H1 (cell line): ENCODE measurements at regions of chr2 and their contacts with region 1.

Region 1: DNA sequence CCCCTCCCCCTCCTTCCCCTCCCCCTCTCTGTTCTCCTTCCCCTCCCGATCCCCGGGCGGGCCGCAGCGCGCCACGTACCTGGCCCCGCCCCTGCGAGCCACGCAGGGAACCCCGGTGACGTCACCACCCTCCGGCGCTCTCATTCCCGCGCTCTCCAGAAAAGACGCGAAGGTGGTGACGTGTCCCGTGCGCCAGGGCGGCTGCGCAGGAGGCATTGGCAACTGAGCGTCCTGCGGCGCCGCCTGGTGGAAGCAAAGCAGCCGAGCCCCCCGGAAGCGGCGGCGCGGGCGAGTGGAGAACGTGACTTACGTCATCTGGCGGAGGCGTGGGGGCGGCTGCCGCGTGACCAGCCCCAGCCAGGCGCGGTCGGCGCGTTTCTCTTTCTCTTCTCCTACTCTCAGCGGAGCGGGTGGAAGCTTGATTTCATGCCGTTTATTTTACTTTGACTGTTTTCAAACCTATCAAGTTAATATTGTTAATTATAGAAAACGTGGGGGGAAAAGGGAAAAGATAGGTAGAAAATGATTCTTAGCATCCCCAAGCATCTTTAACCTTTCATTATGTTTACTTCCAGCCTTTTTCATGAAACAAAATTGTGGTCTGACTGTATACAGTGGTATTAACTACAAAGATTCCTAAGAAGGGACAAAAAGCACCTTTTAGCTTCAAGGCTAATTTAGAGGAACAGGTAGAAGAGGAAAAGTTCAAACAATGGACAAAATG is 48.1 kb downstream of the C2orf42 start:
- DNase-seq: peak; percentile 99
- H3K4me3 ChIP-seq: peak overlapping the region in 2 of 4 experiments; percentile 4 to 64; a peak in 5 of 8 replicates
- H3K27ac ChIP-seq: peak overlapping the region; percentile 70; the same call in 1 of the 2 replicates
- H3K4me1 ChIP-seq: peaks cover 19 to 26% (median 20%) of the 10 kb centered on the region in 4 experiments
- H3K27me3 ChIP-seq: no peaks in the 10 kb centered on the region
- CTCF ChIP-seq: peak; percentile 93 to 96 (median 94)
- EP300 ChIP-seq: peak; percentile 12 to 96
- POLR2A ChIP-seq: peak in 1 of 2 experiments; percentile 42; a peak in 1 of 3 replicates
- RAD21 ChIP-seq: peak; percentile 95 to 99

Region 2: GRCh38 chr2:69933839-69934613 is 208.7 kb before region 1 on chr2:
- CTCF ChIA-PET with region 1: no interaction called
- POLR2A ChIA-PET with region 1: no interaction called
- DNase-seq: no peak
- H3K4me3 ChIP-seq: no peak overlapping the region
- H3K27ac ChIP-seq: no peak overlapping the region
- H3K4me1 ChIP-seq: peaks cover 0 to 6% (median 3%) of the 10 kb centered on the region in 4 experiments; a peak in 3 of 7 replicates
- H3K27me3 ChIP-seq: no peaks in the 10 kb centered on the region
- CTCF ChIP-seq: no peak
- EP300 ChIP-seq: no peak
- POLR2A ChIP-seq: no peak
- RAD21 ChIP-seq: no peak

Region 3: GRCh38 chr2:70029814-70030409 is 112.8 kb before region 1 on chr2:
- CTCF ChIA-PET with region 1: no interaction called
- POLR2A ChIA-PET with region 1: no interaction called
- DNase-seq: peak in 1 of 2 experiments; percentile 61
- H3K4me3 ChIP-seq: no peak overlapping the region
- H3K27ac ChIP-seq: peak overlapping the region; percentile 49; the same call in 1 of the 2 replicates
- H3K4me1 ChIP-seq: peaks cover 2 to 7% (median 5%) of the 10 kb centered on the region in 4 experiments; a peak in 6 of 7 replicates
- H3K27me3 ChIP-seq: no peaks in the 10 kb centered on the region
- CTCF ChIP-seq: no peak
- EP300 ChIP-seq: no peak
- POLR2A ChIP-seq: peak in 1 of 2 experiments; percentile 81; a peak in 2 of 3 replicates
- RAD21 ChIP-seq: peak in 1 of 2 experiments; percentile 8; a peak in 1 of 4 replicates

Region 4: GRCh38 chr2:70070541-70071268 is 72.0 kb before region 1 on chr2:
- CTCF ChIA-PET with region 1: interaction called, 6 read pairs
- POLR2A ChIA-PET with region 1: interaction called, 1,553 read pairs
- DNase-seq: no peak
- H3K4me3 ChIP-seq: no peak overlapping the region
- H3K27ac ChIP-seq: no peak overlapping the region
- H3K4me1 ChIP-seq: no peaks in the 10 kb centered on the region
- H3K27me3 ChIP-seq: no peaks in the 10 kb centered on the region
- CTCF ChIP-seq: peak; percentile 43 to 88 (median 77)
- EP300 ChIP-seq: no peak
- POLR2A ChIP-seq: 0 out of 3 replicates have a peak, but pooled peaks of 1 of the 2 experiments have one; percentile 27
- RAD21 ChIP-seq: peak; percentile 77 to 87

Region 5: GRCh38 chr2:70104231-70105111 is 38.3 kb before region 1 on chr2:
- CTCF ChIA-PET with region 1: interaction called, 4 read pairs
- POLR2A ChIA-PET with region 1: interaction called, 1,553 read pairs
- DNase-seq: no peak
- H3K4me3 ChIP-seq: no peak overlapping the region
- H3K27ac ChIP-seq: no peak overlapping the region
- H3K4me1 ChIP-seq: peaks cover 7 to 16% (median 11%) of the 10 kb centered on the region in 4 experiments
- H3K27me3 ChIP-seq: no peaks in the 10 kb centered on the region
- CTCF ChIP-seq: no peak
- EP300 ChIP-seq: no peak
- POLR2A ChIP-seq: no peak
- RAD21 ChIP-seq: no peak

Region 6: DNA sequence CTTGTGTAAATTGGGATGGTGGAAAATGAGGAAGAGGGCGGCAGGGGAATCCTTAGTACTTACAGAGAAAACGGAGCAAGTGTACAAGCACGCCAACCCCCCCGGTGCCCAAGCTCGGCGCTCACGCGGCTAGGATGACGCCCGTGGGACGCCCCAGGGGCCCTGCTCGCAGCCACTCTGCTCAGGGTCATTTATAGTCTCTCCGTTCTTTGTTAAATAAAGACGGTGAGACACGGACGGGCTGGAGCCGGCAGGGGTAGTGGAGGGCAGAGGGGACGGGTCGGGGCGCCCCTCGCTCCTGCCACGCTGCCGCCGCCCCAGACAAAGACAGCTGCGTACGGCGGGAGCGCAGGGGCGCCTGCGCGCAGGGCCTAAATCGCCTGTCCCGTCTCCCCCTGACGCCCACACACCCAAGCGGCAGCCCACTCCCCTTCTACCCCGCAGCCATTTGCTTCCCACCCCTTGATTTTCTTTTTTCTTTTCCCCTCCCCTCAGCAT is 17.7 kb before region 1 on chr2:
- CTCF ChIA-PET with region 1: interaction called, 42 read pairs
- POLR2A ChIA-PET with region 1: interaction called, 444 read pairs
- DNase-seq: peak in 1 of 2 experiments; percentile 75
- H3K4me3 ChIP-seq: peak overlapping the region; percentile 52 to 89 (median 74)
- H3K27ac ChIP-seq: peak overlapping the region; percentile 97
- H3K4me1 ChIP-seq: peaks cover 7 to 18% (median 10%) of the 10 kb centered on the region in 4 experiments
- H3K27me3 ChIP-seq: no peaks in the 10 kb centered on the region; a peak in 1 of 7 replicates
- CTCF ChIP-seq: no peak
- EP300 ChIP-seq: no peak
- POLR2A ChIP-seq: peak; percentile 50 to 97
- RAD21 ChIP-seq: no peak

Region 7: DNA sequence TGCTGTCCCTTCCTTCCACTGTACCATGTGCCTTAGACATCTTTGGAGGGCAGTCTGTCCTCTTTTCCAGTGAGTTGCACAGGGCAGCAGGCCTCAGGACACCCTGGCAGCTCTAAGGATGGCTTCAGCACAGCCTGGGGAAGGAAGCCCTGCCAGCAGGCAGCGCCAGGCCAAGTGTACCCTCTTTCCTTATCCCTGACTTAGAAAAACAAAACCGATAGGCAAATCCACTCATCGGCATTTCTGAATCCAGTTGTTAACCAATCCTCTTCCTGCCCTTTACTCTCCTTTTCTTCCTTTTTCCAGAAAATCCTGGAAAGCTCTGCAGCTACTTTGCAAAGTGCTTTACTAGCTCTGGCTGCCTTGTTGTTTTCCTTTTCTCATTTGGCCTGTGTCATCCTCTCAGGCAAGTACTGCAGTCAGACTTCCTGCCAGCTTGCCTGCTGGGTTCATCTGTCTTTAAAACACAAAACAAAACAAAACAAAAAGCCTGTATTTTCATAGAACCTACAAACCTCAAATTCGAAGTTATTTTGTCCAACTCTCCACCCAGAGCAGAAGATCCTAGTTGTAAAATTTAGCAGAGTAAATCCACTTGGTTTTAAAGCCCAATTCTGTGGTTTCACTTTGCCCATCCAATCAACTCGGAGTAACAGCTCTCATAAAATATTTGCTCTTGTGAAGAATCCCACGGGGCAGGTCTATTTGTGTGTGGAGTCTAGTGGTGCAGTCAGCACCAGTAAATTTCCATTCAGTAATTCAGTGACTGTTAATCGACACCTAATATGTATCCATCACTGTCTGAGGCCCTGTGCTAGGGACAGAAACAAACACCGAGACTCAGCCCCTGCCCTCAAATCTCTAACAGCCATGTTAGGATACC is 10.3 kb before region 1 on chr2:
- CTCF ChIA-PET with region 1: interaction called, 42 read pairs
- POLR2A ChIA-PET with region 1: interaction called, 444 read pairs
- DNase-seq: no peak
- H3K4me3 ChIP-seq: no peak overlapping the region
- H3K27ac ChIP-seq: peak overlapping the region; percentile 15; the same call in 1 of the 2 replicates
- H3K4me1 ChIP-seq: peaks cover 2 to 12% (median 9%) of the 10 kb centered on the region in 4 experiments; a peak in 5 of 7 replicates
- H3K27me3 ChIP-seq: no peaks in the 10 kb centered on the region
- CTCF ChIP-seq: no peak
- EP300 ChIP-seq: no peak
- POLR2A ChIP-seq: no peak
- RAD21 ChIP-seq: no peak